ENCODE measurements at regions of chr3 and their contacts with region 1.

Region 1: GRCh38 chr3:149657926-149658733 is at the start of gene WWTR1:
- DNase-seq: peak; percentile 84 to 95 (median 87)
- ATAC-seq: peak; percentile 80 to 90 (median 88)
- H3K4me3 ChIP-seq: peak within 1 kb of the TSS; percentile 67 to 77 (median 76)
- H3K27ac ChIP-seq: peak within 1 kb of the TSS; percentile 80 to 94 (median 92)
- H3K4me1 ChIP-seq: no peaks in the 10 kb centered on the region
- H3K27me3 ChIP-seq: no peaks in the 10 kb centered on the region
- CTCF ChIP-seq: no peak
- total RNA-seq, gene WWTR1: 19.8 to 47.0 (median 25.2) TPM

Region 2: GRCh38 chr3:149527531-149528339 is 130.4 kb before region 1 on chr3:
- intact Hi-C with region 1: loop called in 2 of 3 experiments (anchors 10 kb)
- DNase-seq: no peak
- ATAC-seq: peak in 3 of 4 donors; percentile 48 to 58 (median 48)
- H3K4me3 ChIP-seq: no peak overlapping the region
- H3K27ac ChIP-seq: peak overlapping the region in 2 of 4 donors; percentile 39 to 44
- H3K4me1 ChIP-seq: peaks cover 0 to 3% (median 0%) of the 10 kb centered on the region in 3 donors
- H3K27me3 ChIP-seq: no peaks in the 10 kb centered on the region
- CTCF ChIP-seq: no peak

Region 3: GRCh38 chr3:149536429-149536828 is 121.7 kb before region 1 on chr3:
- intact Hi-C with region 1: loop called in 1 of 3 experiments (anchors 10 kb)
- DNase-seq: peak; percentile 72 to 80 (median 78)
- ATAC-seq: peak; percentile 75 to 90 (median 80)
- H3K4me3 ChIP-seq: no peak overlapping the region
- H3K27ac ChIP-seq: peak overlapping the region in 2 of 4 donors; percentile 42 to 46
- H3K4me1 ChIP-seq: peaks cover 5 to 20% (median 11%) of the 10 kb centered on the region in 3 donors
- H3K27me3 ChIP-seq: no peaks in the 10 kb centered on the region
- CTCF ChIP-seq: no peak

Region 4: DNA sequence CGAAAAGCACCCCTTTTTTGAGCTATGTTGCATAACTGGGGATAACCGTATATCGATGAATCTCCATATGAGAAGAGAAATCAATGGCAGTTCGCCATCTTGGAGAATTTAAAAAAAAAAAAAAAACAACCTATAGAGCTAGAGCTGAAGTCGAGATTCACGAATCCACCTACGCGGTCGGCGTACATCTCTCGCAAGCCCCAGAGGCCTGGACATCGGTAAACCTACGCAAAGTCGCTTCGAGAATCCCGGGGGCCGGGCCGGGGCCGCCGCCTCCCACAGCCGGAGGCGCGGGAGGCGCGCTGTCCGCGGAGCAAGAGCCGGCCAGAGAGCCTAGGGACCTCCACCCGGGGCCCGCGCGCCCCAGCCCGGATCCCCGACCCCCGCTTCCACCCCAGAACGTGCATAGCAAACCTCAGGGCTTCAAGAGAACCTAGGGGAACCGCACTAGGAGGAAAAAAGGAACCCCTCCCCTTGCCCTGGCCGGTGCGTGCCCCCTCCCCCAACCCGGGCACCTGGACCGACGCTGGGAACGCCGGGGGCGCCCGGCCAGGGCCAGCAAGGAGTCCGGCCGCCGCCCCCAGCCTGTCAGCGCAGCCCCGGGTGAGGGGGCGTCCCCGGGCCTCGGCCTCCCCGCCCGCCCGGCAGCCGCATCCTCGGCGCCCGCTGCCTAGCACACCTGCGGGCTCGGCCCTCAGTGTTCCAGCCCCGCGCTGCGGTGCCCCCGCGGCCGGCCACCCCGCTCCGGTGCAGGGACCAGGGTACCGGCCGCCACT is 312.0 kb after region 1 on chr3:
- intact Hi-C with region 1: no loop called
- DNase-seq: peak; percentile 79 to 89 (median 82)
- ATAC-seq: peak; percentile 76 to 84 (median 79)
- H3K4me3 ChIP-seq: peak overlapping the region; percentile 77 to 93 (median 89)
- H3K27ac ChIP-seq: peak overlapping the region; percentile 61 to 85 (median 74)
- H3K4me1 ChIP-seq: peaks cover 4 to 13% (median 4%) of the 10 kb centered on the region in 3 donors
- H3K27me3 ChIP-seq: peaks cover 0 to 6% (median 1%) of the 10 kb centered on the region in 4 donors
- CTCF ChIP-seq: no peak

Region 5: DNA sequence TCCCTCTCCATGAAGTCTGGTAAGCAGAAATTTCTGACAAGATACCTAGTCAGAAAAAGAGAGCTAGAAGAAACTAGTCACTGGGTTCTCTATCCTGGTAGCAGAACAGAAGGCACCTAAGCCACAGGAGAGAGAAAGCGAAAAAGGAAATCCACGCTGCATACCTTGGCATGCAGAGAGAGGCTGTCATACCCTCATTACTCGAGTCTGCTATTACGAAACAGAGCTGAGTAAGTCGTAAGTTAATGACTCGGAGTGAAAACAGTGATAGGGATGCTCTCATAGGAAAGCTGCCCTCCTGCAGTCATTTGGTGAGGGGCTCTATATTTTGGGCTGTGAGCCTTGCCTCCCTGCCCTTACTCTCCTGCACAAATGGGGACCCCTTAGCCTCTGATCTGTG is 1298.2 kb after region 1 on chr3:
- intact Hi-C with region 1: no loop called
- DNase-seq: no peak
- ATAC-seq: no peak
- H3K4me3 ChIP-seq: no peak overlapping the region
- H3K27ac ChIP-seq: no peak overlapping the region
- H3K4me1 ChIP-seq: no peaks in the 10 kb centered on the region
- H3K27me3 ChIP-seq: no peaks in the 10 kb centered on the region
- CTCF ChIP-seq: no peak